ENCODE measurements at regions of chr4 and their contacts with region 1.

Region 1: DNA sequence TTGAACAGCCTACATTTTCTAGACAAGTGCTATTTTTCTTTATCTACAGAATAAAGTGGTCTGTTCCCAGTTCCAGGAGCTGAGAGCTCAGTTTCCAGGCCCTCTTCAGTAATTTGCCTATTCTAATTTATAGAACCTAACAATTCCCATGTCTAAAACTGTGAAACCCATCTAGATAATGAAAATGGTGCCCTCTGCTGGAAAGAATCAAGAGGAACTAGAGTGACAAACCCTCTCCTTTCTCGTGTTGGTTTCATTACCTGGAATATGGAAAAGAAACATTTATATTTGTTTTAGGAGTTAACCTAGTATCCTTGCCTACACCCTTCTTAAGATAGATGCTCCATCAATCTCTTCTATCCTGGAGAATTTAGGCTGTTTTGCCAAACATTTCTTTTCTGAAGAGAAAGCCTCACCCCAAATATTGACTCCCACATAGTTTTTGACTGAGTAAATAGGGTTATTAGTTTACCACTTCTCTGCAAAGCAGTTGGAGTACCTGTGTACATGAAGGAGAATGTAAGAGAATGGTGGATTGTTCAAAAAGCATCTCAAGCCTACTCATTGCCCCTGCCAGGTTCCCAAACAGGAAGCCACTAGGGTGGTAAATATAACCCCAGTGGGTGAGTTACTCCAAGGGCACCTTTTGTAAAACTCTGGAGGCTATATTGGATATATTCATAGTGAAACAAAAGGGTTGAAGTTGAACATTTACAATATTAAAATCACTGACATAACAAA is 121.6 kb downstream of the RASL11B start:
- DNase-seq: no peak
- ATAC-seq: peak; percentile 78 to 88 (median 86)
- H3K4me3 ChIP-seq: no peak overlapping the region
- H3K27ac ChIP-seq: no peak overlapping the region
- H3K4me1 ChIP-seq: no peaks in the 10 kb centered on the region
- H3K27me3 ChIP-seq: no peaks in the 10 kb centered on the region
- CTCF ChIP-seq: peak; percentile 68 to 82 (median 72)
- POLR2A ChIP-seq: no peak

Region 2: DNA sequence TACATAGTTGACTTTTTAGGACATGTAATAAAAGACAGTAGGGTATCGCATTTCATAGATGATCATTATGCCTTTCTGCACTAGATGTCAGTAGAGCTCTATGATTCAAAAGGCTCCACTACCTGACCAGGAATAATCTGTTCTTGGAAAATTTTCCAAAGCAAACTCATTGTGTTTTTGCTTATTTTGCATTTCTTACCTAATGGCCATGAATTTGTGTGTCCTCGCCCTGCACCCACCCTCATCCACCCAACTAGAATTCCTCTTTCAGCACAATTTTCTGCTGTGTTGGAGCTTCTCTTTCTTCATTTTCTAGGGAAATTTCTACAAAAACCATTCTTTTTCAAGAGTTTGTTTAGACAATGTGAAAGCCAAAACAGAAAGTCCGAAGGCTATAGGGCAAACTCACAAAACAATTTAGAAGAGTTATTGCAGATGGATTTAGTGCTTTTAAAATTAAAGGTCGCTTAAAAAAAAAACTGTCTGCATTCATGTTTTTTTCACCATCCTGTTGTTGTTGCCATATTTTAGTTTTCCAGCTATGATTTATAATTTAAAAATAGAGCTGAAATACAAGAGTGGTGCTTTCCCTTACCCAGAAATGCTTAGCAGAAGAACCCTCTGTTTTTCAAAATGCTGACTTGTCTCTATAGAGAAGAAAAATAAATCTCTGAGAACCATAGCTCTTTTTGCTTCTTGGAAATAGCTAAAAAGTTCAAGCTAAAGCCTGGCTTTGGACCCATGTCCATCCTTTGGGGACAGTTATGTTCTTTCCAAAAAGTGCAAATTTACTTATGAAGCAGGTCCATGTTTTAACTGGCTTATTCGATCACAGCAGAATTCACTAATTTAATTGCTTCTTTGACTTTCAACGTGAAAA is 748.9 kb before region 1 on chr4:
- intact Hi-C with region 1: loop called in 1 of 2 experiments (anchors 10 kb)
- DNase-seq: peak in 1 of 3 donors; percentile 48
- ATAC-seq: peak; percentile 99 to 100 (median 99)
- H3K4me3 ChIP-seq: peak overlapping the region in 1 of 3 donors; percentile 26
- H3K27ac ChIP-seq: peak overlapping the region in 2 of 3 donors; percentile 2 to 27
- H3K4me1 ChIP-seq: no peaks in the 10 kb centered on the region
- H3K27me3 ChIP-seq: no peaks in the 10 kb centered on the region
- CTCF ChIP-seq: peak; percentile 58 to 71 (median 69)
- POLR2A ChIP-seq: no peak

Region 3: DNA sequence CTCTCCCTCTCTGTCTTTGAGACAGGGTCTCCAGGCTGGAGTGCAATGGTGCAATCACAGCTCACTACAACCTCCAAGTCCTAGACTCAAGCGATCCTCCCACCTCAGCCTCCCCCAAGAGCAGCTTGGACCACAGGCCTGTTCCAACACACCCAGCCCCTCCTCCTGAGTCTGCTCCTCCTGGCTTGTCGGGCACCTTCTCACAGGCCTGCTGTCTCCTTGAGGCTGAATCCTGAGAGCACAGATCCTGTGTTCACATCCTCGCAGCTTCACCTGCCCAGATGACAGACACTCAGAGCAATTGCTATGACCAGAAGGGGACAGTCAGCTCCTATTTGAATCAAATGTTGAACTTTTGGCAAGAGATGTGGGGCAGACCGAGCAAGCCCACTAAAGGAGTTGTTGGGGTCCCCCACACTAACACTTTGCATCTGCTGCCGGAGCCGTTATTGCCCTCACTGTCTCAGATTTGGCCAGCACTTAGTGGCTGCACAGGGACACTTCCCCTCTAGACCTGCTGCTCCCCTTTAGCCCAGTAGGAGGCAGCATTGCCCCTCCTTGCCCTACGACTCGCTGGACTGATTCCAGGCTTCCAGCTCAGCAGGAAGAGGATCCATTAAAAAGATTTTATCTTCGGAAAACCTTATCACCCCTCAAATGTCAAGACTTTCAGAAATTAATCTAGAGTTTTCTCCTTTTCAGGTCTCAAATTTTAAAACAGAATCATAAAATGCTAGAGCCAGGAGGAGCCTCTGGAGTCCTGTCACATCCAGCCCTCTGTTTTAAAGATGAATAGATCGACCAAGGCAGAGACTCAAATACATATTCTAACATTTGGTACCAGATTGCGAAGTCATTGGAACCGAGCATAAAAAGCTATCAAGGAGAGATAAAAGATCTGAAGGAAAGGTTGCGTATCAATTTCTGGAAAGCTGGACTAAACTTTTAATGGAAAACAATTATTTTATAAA is 438.3 kb before region 1 on chr4:
- intact Hi-C with region 1: loop called in 1 of 2 experiments (anchors 5 kb)
- DNase-seq: peak; percentile 71 to 79 (median 71)
- ATAC-seq: peak; percentile 99 to 100 (median 100)
- H3K4me3 ChIP-seq: no peak overlapping the region
- H3K27ac ChIP-seq: no peak overlapping the region
- H3K4me1 ChIP-seq: no peaks in the 10 kb centered on the region
- H3K27me3 ChIP-seq: no peaks in the 10 kb centered on the region
- CTCF ChIP-seq: peak; percentile 94 to 97 (median 96)
- POLR2A ChIP-seq: no peak